ENCODE measurements at regions of chr11 and their contacts with region 1.

Region 1: GRCh38 chr11:113730887-113731726 is 25.0 kb upstream of the TMPRSS5 start:
- DNase-seq: peak; percentile 55
- H3K4me3 ChIP-seq: no peak overlapping the region
- H3K27ac ChIP-seq: no peak overlapping the region
- H3K4me1 ChIP-seq: peaks cover 19% of the 10 kb centered on the region
- H3K27me3 ChIP-seq: no peaks in the 10 kb centered on the region
- CTCF ChIP-seq: peak; percentile 67 to 85

Region 2: DNA sequence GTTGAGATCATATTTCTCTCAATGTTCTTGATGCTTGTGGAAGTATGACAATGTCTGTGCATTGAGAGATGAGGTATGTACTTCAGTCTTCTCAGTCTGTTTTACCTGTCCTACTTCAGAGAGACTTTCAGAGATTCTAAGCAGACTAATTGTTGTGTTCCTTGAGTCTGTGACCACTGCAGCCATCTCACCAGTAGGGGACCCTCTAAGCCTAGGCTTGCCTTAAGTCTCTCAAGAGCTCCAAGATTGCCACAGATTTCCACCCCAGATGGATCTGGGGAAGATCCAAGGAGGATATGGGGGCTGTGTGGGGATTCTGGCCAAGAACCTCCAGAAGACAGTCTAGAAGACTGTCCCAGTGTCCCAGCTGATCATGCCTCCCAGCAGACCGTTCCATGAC is 1290.6 kb before region 1 on chr11:
- CTCF ChIA-PET with region 1: no interaction called
- dilution Hi-C with region 1: no loop called
- in situ Hi-C with region 1: no loop called
- intact Hi-C with region 1: no loop called
- DNase-seq: peak; percentile 19
- H3K4me3 ChIP-seq: no peak overlapping the region
- H3K27ac ChIP-seq: no peak overlapping the region
- H3K4me1 ChIP-seq: no peaks in the 10 kb centered on the region
- H3K27me3 ChIP-seq: peaks cover 10% of the 10 kb centered on the region
- CTCF ChIP-seq: peak; percentile 44 to 45

Region 3: DNA sequence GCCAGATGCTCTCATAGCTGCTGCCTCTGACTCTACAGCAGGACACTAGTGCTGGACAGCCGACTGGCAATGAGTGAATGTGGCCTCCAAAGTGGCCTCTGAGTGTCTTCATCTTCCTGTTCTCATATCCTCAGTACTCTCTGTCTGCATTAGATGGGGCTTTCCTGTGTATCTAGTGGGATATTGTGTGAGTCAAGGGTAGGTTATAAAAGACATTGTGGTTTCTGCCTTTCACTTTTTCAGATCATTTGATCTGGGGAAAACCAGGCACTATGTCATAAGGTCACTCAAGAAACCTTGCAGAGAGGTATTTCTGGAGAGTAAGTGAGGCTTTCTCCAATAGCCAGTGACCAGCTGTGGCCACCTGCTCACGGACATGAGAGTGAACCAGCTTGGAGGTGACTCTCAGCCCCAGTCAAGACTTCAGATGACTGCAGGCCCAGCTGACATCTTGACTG is 1103.5 kb before region 1 on chr11:
- CTCF ChIA-PET with region 1: interaction called, 15 read pairs
- dilution Hi-C with region 1: no loop called
- in situ Hi-C with region 1: no loop called
- intact Hi-C with region 1: no loop called
- DNase-seq: peak; percentile 63
- H3K4me3 ChIP-seq: no peak overlapping the region
- H3K27ac ChIP-seq: no peak overlapping the region
- H3K4me1 ChIP-seq: peaks cover 22% of the 10 kb centered on the region
- H3K27me3 ChIP-seq: no peaks in the 10 kb centered on the region
- CTCF ChIP-seq: no peak

Region 4: GRCh38 chr11:113314389-113315301 is 416.5 kb before region 1 on chr11 and contains the start of gene TTC12:
- CTCF ChIA-PET with region 1: interaction called, 4 read pairs
- dilution Hi-C with region 1: no loop called
- in situ Hi-C with region 1: loop called (anchors 5 to 10 kb)
- intact Hi-C with region 1: loop called (anchors 2 kb)
- DNase-seq: peak; percentile 94
- H3K4me3 ChIP-seq: peak within 1 kb of the TSS; percentile 68 to 95 (median 89)
- H3K27ac ChIP-seq: peak within 1 kb of the TSS; percentile 95
- H3K4me1 ChIP-seq: peaks cover 35% of the 10 kb centered on the region
- H3K27me3 ChIP-seq: no peaks in the 10 kb centered on the region
- CTCF ChIP-seq: no peak
- total RNA-seq, gene TTC12: 32.5 to 36.5 TPM

Region 5: DNA sequence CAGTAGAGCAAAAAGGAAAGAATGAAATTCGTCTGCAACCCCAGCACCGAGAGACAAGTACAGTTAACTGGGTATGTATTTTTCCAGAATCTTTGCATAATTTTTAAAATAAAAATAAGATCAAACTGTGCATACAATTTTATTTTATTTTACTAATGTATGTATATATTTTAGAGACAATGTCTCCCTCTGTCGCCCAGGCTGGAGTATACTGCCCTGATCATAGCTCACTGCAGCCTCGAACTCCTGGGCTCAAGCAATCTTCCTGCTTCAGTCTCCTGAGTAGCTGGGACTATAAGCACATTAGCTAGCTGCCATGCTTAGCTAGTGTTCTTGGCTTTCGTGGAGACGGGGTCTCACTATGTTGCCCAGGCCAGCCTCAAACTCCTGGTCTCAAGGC is 237.1 kb before region 1 on chr11:
- CTCF ChIA-PET with region 1: no interaction called
- dilution Hi-C with region 1: no loop called
- in situ Hi-C with region 1: no loop called
- intact Hi-C with region 1: loop called (anchors 1 kb)
- DNase-seq: no peak
- H3K4me3 ChIP-seq: no peak overlapping the region
- H3K27ac ChIP-seq: no peak overlapping the region
- H3K4me1 ChIP-seq: peaks cover 13% of the 10 kb centered on the region
- H3K27me3 ChIP-seq: no peaks in the 10 kb centered on the region
- CTCF ChIP-seq: peak in 1 of 2 donors; percentile 26

Region 6: GRCh38 chr11:113546757-113547507 is 184.2 kb before region 1 on chr11:
- CTCF ChIA-PET with region 1: no interaction called
- dilution Hi-C with region 1: no loop called
- in situ Hi-C with region 1: no loop called
- intact Hi-C with region 1: loop called (anchors 5 kb)
- DNase-seq: peak; percentile 74
- H3K4me3 ChIP-seq: no peak overlapping the region
- H3K27ac ChIP-seq: peak overlapping the region; percentile 65
- H3K4me1 ChIP-seq: peaks cover 38% of the 10 kb centered on the region
- H3K27me3 ChIP-seq: no peaks in the 10 kb centered on the region
- CTCF ChIP-seq: no peak

Region 7: GRCh38 chr11:113613619-113614018 is 117.5 kb before region 1 on chr11:
- CTCF ChIA-PET with region 1: no interaction called
- dilution Hi-C with region 1: no loop called
- in situ Hi-C with region 1: no loop called
- intact Hi-C with region 1: no loop called
- DNase-seq: no peak
- H3K4me3 ChIP-seq: no peak overlapping the region
- H3K27ac ChIP-seq: no peak overlapping the region
- H3K4me1 ChIP-seq: peaks cover 3% of the 10 kb centered on the region
- H3K27me3 ChIP-seq: no peaks in the 10 kb centered on the region
- CTCF ChIP-seq: no peak

Measured in mammary epithelial cell (primary cell).